GM13977 (cell line): ENCODE measurements at regions of chr7 and their contacts with region 1.

Region 1: GRCh38 chr7:8724080-8724718 is 290.8 kb downstream of the NXPH1 start:
- DNase-seq: peak; percentile 67
- CTCF ChIP-seq: peak; percentile 76

Region 2: DNA sequence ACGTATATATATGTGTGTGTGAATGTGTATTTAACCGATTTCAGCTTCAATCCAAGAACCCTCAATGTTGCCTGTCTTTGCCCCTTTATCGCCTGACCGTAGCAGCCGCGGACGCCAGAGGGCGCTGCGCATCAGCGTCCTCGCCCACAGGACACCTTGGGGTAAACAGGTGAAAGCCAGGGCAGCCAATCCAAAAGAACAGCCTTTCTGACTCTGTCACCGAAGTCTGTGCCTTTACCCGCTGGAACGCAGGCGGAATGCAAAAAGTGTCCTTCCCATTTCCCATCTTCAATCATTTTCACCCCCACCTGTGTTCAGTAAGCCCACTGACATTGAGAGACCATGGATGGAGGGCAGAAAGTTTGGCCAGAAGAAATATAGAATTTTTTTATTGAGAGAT is 287.2 kb before region 1 on chr7:
- in situ Hi-C with region 1: loop called (anchors 25 kb)
- DNase-seq: peak; percentile 81
- CTCF ChIP-seq: peak; percentile 96